ENCODE measurements at regions of chr15 and their contacts with region 1.

Region 1: DNA sequence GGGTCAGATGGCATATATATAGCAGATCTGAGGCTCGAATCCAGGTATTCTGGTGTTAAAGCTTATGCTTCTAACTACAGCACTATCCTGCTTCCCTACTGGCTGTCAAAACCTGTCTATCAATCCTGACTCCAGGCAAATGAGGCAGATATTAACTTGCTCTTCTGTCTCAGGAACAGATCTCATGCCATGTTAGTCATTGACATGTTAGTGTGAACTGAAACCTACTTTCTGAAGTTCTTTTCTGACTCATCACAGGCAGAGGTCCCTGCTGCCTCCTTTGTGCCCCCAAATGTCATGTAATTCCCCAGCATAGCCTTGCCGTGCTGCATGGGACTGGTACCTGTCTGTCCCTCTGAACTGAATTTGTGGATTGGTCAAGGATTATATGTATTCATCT is 125.0 kb upstream of the SMAD3 start:
- DNase-seq: no peak
- H3K4me3 ChIP-seq: no peak overlapping the region
- H3K27ac ChIP-seq: no peak overlapping the region
- H3K4me1 ChIP-seq: peaks cover 0 to 3% (median 0%) of the 10 kb centered on the region in 4 experiments; a peak in 4 of 7 replicates
- H3K27me3 ChIP-seq: no peaks in the 10 kb centered on the region
- CTCF ChIP-seq: no peak
- EP300 ChIP-seq: no peak
- POLR2A ChIP-seq: no peak
- RAD21 ChIP-seq: no peak

Region 2: GRCh38 chr15:66815322-66815721 is 125.0 kb before region 1 on chr15:
- CTCF ChIA-PET with region 1: no interaction called
- POLR2A ChIA-PET with region 1: no interaction called
- DNase-seq: no peak
- H3K4me3 ChIP-seq: no peak overlapping the region
- H3K27ac ChIP-seq: no peak overlapping the region
- H3K4me1 ChIP-seq: no peaks in the 10 kb centered on the region
- H3K27me3 ChIP-seq: no peaks in the 10 kb centered on the region
- CTCF ChIP-seq: no peak
- EP300 ChIP-seq: no peak
- POLR2A ChIP-seq: no peak
- RAD21 ChIP-seq: no peak

Region 3: DNA sequence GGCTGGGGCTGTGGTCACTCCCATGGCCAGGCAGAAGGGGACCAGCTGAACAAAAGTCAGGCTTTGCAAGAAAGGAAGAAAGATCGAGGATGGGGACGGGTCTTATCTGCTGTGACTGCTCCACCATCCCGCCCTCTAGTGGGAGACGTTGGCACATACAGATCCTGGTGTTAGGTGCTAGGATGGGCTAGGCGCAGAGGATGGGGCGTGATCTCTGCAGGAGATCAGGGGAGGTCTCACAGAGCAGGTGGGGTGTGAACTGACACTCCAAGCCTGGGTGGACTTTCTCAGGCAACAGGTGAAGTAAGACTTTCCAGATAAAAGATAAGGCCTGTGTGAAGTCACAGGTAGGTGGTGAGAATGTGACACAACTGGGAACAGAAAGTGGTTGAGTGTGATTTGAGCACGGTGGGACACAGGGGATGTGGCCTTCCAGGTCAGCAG is 16.9 kb before region 1 on chr15:
- CTCF ChIA-PET with region 1: interaction called, 30 read pairs
- POLR2A ChIA-PET with region 1: no interaction called
- DNase-seq: peak in 1 of 2 experiments; percentile 87
- H3K4me3 ChIP-seq: no peak overlapping the region
- H3K27ac ChIP-seq: no peak overlapping the region
- H3K4me1 ChIP-seq: no peaks in the 10 kb centered on the region; a peak in 1 of 7 replicates
- H3K27me3 ChIP-seq: no peaks in the 10 kb centered on the region; a peak in 1 of 7 replicates
- CTCF ChIP-seq: peak; percentile 83 to 98 (median 94)
- EP300 ChIP-seq: no peak
- POLR2A ChIP-seq: no peak
- RAD21 ChIP-seq: peak; percentile 54 to 72; a peak in 3 of 4 replicates

Measured in H1 (cell line).